ENCODE measurements at regions of chr2 and their contacts with region 1.

Region 1: DNA sequence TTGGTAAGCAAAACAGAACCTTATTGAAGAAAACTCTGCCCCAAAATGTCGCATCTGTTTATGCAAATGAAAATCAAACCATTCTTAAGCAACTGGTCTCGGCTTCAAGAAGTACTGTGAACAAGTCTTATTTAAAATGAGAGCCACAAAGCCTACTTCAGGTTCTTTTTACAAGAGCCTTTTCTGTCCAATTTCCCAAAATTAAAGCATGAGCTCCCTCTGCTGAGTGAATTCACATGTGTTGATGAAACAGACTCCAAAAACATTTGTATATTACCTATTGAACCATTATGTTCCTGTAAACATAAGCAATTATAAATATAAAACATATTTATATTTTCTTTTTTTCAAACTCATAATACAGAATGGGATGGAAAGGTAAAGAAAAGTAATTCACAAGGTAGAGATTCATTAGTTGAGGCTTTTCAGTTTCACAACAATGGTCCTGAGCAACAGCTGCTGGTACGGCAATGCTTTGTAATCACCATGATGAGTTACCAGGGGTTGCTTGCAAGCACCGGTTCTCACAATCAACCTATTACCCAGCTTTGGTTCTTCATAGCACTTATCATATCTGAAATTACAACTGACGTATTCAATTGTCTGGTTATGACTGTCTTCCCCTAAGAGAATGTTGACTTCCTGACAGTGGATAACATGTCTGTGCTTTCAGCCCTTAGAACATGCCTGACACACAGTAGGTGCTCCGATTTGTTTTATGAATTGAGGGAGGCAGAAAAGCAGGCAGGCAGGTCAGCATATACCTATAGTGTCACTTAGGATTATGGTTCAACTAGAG is 108.4 kb upstream of the BZW1 start:
- DNase-seq: peak; percentile 26
- H3K4me3 ChIP-seq: no peak overlapping the region
- H3K27me3 ChIP-seq: peaks cover 2% of the 10 kb centered on the region
- CTCF ChIP-seq: peak; percentile 53

Region 2: DNA sequence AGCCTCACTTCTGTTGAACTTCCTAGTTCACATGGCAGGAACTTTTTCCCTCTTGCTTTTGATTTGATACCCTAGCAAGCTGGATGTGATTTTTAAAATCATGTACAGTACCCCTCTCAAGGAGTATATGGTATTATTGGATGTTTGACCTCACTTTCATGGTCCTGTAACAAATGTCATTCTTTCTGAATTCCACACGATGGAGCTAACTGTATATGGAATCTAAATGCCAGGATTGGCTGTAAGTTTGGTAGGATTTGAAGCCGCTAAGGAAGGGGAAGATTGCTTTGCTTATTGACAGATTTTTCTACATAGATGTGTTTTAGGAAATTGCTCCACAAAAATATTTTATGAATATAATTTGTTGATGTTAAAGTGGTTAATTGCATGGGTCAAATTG is 729.6 kb before region 1 on chr2:
- CTCF ChIA-PET with region 1: interaction called, 22 read pairs
- POLR2A ChIA-PET with region 1: no interaction called
- DNase-seq: no peak
- H3K4me3 ChIP-seq: no peak overlapping the region
- H3K27me3 ChIP-seq: no peaks in the 10 kb centered on the region
- CTCF ChIP-seq: peak; percentile 53

Region 3: DNA sequence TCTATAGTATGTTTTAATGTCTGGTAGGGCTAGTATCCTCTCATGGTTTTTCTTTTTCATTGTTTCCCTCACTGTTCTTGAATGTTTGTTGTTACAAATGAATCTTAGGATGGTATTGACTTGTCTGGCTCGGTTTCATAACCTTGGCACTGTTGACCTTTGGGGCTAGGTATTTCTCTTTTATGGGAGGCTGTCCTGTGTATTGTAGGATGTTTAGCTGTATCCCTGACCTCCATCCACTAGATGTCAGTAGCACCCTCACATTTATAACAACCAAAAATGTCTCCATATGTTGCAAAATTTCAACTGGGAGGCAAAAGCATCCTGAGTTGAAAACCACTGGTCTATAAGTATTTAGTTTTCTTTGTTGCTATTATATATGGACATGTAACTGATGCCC is 124.5 kb before region 1 on chr2:
- CTCF ChIA-PET with region 1: interaction called, 32 read pairs
- POLR2A ChIA-PET with region 1: no interaction called
- DNase-seq: no peak
- H3K4me3 ChIP-seq: no peak overlapping the region
- H3K27me3 ChIP-seq: no peaks in the 10 kb centered on the region
- CTCF ChIP-seq: peak; percentile 57

Region 4: DNA sequence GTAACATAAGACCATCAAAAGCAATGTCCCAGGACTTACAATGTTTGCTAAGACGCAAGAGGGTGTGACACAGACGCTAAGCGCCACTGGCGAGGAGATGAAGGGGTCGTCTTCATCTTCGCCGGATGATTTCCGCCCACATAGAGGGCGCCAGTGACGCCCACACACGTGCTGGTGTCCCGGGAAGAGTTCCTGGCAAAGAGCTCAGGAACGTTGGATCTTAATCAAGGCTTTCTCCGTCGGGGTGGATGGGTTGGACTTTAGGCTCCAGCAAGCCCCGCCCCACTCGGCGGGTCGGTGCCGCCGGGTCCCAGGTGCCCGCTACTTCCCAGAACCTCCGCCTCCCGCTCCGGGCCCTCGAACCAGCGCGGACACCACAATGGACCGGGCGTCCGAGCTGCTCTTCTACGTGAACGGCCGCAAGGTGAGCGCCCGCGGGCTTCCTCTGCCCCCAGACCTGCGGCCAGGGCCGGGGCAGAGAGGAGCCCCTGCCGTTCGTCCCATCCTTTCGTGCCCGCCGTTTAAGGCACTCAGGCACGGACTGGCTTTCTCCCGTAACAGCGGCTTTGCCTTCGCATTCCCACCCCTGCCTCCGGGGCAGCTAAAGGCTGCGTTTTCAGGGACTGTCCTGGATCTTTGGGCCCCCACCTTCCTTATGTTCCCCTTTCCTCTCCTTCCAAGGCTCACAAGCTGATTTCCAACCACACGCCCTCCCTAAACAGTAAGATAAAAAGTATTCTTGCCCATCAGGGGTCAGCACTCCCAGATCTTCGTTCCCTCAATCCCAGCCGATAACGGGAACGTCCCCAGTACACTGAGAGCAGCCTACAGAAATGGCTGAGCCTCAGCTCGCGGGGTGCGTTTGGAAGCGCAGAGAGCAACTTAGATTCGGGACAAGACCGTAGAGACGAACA is 117.3 kb before region 1 on chr2 and contains the start of gene AOX1:
- CTCF ChIA-PET with region 1: interaction called, 20 read pairs
- POLR2A ChIA-PET with region 1: no interaction called
- DNase-seq: no peak
- H3K4me3 ChIP-seq: peak within 1 kb of the TSS; percentile 51
- H3K27me3 ChIP-seq: no peaks in the 10 kb centered on the region
- CTCF ChIP-seq: peak; percentile 33; the same call in 1 of the 2 replicates
- polyA plus RNA-seq, gene AOX1: 10.2 and 16.0 TPM in 2 replicates

Region 5: DNA sequence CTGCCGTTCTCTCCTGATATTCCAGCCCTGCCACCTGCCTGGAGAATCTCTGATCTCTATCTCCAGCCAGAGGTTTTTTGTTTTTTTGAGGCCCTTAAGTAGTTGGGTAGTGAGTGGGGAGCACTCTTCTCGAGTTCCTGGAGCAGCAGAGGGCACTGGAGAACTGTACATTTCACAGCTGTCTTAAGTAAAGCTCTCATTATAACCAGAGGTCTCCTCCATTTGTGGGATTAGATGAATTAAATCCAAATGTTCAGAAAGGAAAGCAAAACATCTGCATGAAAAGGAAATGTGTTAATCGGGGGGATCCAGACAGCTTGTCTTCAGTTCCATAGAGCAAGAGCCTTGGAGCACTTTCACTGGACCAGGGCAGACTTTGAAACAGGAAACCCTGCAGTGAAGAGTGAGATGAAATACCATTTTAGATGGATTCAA is 84.7 kb before region 1 on chr2:
- CTCF ChIA-PET with region 1: interaction called, 92 read pairs
- POLR2A ChIA-PET with region 1: no interaction called
- DNase-seq: no peak
- H3K4me3 ChIP-seq: no peak overlapping the region
- H3K27me3 ChIP-seq: no peaks in the 10 kb centered on the region
- CTCF ChIP-seq: peak; percentile 36; the same call in 1 of the 2 replicates

Region 6: GRCh38 chr2:200735061-200735460 is 31.7 kb after region 1 on chr2:
- CTCF ChIA-PET with region 1: interaction called, 42 read pairs
- POLR2A ChIA-PET with region 1: no interaction called
- DNase-seq: no peak
- H3K4me3 ChIP-seq: no peak overlapping the region
- H3K27me3 ChIP-seq: peaks cover 3% of the 10 kb centered on the region; the same call in 1 of the 2 replicates
- CTCF ChIP-seq: no peak

Region 7: DNA sequence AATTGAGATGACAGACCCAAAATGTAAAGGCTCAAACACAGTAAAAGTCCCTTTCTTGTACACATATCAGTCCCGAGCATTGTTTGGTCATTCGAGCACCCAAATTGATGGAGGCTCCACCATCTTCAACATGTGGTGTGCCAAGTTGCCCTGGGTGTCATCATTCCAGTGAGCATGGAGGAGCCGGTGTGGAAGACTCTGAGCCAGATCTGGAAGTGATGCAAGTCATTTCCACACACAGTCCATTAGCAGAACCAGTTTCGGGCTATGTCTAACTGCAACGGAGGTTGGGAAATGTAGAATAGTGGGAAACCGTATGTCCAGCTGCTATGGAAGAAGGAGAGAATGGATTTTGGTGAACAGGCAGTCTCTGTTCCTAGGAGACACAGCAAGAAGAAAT is 67.5 kb after region 1 on chr2:
- CTCF ChIA-PET with region 1: no interaction called
- POLR2A ChIA-PET with region 1: no interaction called
- DNase-seq: no peak
- H3K4me3 ChIP-seq: no peak overlapping the region
- H3K27me3 ChIP-seq: no peaks in the 10 kb centered on the region
- CTCF ChIP-seq: no peak